ENCODE measurements at regions of chr11 and their contacts with region 1.

Region 1: GRCh38 chr11:111601979-111602864 is at the start of gene SIK2:
- DNase-seq: peak; percentile 87 to 98 (median 95)

Region 2: GRCh38 chr11:111733016-111733415 is 130.8 kb after region 1 on chr11:
- intact Hi-C with region 1: loop called (anchors 2 kb)
- DNase-seq: peak in 11 of 42 donors; percentile 15 to 70 (median 35)

Region 3: GRCh38 chr11:111777094-111778046 is 175.1 kb after region 1 on chr11:
- intact Hi-C with region 1: loop called (anchors 2 kb)
- DNase-seq: peak in 23 of 42 donors; percentile 26 to 81 (median 51)

Measured in head of caudate nucleus (tissue), 42 donors.